Activated T-helper 1 cell treated with anti-CD3 and anti-CD28 coated beads, Interleukin-12 subunit alpha, Interleukin-12 subunit beta, Interleukin-2, Interleukin-4 antibody, amounts not matched to agents 30 ng/mL and 10 ng/mL and 1 ng/mL, durations not matched to agents 14 hours and 24 hours and 36 hours (primary cell): ENCODE measurements at regions of chr1 and their contacts with region 1.

Region 1: DNA sequence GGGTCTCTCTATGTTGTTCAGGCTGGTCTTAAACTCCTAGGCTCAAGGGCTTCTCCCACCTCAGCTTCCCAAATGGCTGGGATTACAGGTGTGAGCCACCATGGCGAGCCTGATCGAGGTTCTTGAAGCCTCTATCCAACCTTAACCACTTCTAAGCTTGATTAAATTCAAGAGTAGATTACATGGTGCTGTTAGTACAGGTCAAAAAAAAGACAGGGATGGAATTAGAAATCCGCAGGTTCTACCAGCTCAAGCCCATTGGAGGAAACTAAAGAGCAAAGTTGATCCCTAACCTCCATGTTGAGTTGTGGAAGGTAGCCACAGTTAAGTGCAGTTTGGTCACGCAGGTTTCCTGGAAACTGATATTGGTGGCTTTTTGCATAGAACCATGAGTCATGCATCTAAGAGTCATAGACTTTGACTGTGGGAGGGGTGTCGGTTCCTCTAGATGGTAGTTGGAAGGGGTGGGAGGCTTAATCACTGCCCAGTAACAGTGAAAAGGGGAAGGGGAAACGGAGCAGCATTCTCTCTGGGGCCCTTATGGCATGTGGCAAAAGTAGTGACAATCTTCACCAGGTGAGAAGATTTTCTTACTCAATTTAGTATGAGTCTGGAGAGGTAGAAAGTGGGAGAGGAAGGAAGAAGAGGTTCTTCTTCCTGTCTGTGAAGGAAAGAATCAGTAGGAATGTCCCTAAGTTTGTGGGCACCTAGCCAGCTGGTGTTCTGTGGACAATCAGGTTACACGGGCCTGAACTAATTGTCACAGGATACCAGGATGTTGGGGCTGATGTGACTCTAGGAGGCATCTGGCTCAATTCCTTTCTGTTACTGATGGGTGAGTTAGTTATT is 7.0 kb downstream of the CD53 start:
- DNase-seq: peak; percentile 74
- H3K4me3 Mint-ChIP-seq: peak overlapping the region; percentile 78
- H3K27ac Mint-ChIP-seq: peak overlapping the region; percentile 99
- H3K4me1 Mint-ChIP-seq: peaks cover 84% of the 10 kb centered on the region
- H3K27me3 Mint-ChIP-seq: no peaks in the 10 kb centered on the region

Region 2: GRCh38 chr1:110235834-110236682 is 643.9 kb before region 1 on chr1:
- intact Hi-C with region 1: loop called (anchors 1 kb)
- DNase-seq: no peak
- H3K4me3 Mint-ChIP-seq: no peak overlapping the region
- H3K27ac Mint-ChIP-seq: peak overlapping the region; percentile 80
- H3K4me1 Mint-ChIP-seq: peaks cover 51% of the 10 kb centered on the region
- H3K27me3 Mint-ChIP-seq: no peaks in the 10 kb centered on the region

Region 3: DNA sequence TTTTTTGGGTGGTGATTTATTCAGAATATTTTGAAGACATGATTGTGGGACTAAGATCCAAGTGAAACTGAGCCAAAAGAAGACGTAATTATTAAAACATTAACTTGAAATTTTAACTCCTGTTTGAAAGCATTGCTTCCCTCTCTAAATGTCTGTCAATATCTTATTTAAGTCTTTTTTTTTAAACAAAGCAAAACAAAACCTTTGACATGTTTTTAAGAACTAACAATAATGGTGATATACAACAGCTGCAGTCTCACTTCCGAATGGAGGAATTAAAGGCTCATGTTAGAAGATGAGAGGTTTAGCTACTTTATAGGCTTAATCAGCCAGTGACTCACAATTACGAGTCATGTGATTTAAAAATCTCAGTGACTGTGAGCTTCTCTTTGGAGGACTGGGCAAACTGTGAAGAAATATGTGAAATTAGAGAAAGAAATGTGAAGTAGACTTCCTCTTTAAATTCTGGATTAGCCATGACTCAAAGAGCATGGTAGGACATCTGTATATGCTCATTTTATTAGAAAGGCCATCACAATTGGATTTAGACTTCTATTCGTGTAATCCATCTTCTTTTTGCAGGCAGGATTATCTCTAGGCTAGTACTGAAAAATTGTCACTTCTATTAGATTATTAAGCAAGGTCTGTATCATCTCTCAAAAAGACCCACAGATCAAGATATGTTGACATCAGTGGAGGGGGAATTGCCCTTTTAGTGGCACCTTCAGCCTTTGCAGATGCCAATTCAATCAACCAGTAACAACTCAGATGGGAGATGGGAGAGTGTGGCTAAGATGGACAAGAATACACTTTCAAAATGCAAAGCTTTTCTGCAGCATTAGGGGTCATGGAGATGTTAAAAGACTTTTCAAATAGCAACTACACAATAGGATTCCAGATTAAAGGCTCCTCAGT is 233.9 kb before region 1 on chr1:
- intact Hi-C with region 1: loop called (anchors 1 kb)
- DNase-seq: no peak
- H3K4me3 Mint-ChIP-seq: peak overlapping the region; percentile 56
- H3K27ac Mint-ChIP-seq: peak overlapping the region; percentile 81
- H3K4me1 Mint-ChIP-seq: peaks cover 53% of the 10 kb centered on the region
- H3K27me3 Mint-ChIP-seq: no peaks in the 10 kb centered on the region

Region 4: DNA sequence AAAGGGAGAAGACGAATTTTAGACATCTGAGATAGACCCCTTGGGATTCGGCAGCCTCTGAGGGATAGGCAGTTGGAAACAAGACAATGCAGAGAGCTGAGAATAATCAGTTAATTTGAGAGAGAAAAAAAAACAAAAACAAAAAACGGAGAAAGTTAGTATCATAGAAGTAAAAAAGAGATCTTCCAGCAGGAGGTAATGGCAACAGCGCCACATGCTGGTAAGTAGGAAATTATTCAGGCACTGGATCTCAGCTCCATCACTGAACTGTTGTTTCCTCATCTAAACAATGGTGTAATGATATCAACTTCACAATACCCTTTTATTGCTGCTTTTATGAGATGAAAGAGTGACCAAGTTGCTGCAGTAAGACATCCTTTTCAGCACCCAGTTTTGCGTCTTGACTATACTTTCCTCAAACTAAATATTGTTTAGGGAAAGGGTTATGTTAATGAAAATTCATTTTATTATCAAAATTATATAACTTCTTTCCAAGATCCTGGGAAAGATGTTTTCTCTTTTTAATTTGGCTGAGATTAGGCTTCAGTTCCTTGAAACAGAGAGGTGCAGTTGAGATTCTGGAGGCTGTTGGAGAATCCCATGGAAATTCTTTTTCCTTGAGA is 113.8 kb before region 1 on chr1:
- intact Hi-C with region 1: no loop called
- DNase-seq: peak; percentile 34
- H3K4me3 Mint-ChIP-seq: no peak overlapping the region
- H3K27ac Mint-ChIP-seq: no peak overlapping the region
- H3K4me1 Mint-ChIP-seq: peaks cover 14% of the 10 kb centered on the region
- H3K27me3 Mint-ChIP-seq: peaks cover 17% of the 10 kb centered on the region

Region 5: GRCh38 chr1:110893908-110894490 is 14.0 kb after region 1 on chr1:
- intact Hi-C with region 1: loop called (anchors 1 kb)
- DNase-seq: no peak
- H3K4me3 Mint-ChIP-seq: no peak overlapping the region
- H3K27ac Mint-ChIP-seq: peak overlapping the region; percentile 78
- H3K4me1 Mint-ChIP-seq: peaks cover 94% of the 10 kb centered on the region
- H3K27me3 Mint-ChIP-seq: no peaks in the 10 kb centered on the region

Region 6: GRCh38 chr1:110904485-110904868 is 24.5 kb after region 1 on chr1:
- intact Hi-C with region 1: no loop called
- DNase-seq: no peak
- H3K4me3 Mint-ChIP-seq: no peak overlapping the region
- H3K27ac Mint-ChIP-seq: peak overlapping the region; percentile 3
- H3K4me1 Mint-ChIP-seq: peaks cover 2% of the 10 kb centered on the region
- H3K27me3 Mint-ChIP-seq: no peaks in the 10 kb centered on the region

Region 7: GRCh38 chr1:110921953-110922352 is 42.0 kb after region 1 on chr1:
- intact Hi-C with region 1: no loop called
- DNase-seq: no peak
- H3K4me3 Mint-ChIP-seq: no peak overlapping the region
- H3K27ac Mint-ChIP-seq: no peak overlapping the region
- H3K4me1 Mint-ChIP-seq: peaks cover 5% of the 10 kb centered on the region
- H3K27me3 Mint-ChIP-seq: peaks cover 7% of the 10 kb centered on the region

Region 8: DNA sequence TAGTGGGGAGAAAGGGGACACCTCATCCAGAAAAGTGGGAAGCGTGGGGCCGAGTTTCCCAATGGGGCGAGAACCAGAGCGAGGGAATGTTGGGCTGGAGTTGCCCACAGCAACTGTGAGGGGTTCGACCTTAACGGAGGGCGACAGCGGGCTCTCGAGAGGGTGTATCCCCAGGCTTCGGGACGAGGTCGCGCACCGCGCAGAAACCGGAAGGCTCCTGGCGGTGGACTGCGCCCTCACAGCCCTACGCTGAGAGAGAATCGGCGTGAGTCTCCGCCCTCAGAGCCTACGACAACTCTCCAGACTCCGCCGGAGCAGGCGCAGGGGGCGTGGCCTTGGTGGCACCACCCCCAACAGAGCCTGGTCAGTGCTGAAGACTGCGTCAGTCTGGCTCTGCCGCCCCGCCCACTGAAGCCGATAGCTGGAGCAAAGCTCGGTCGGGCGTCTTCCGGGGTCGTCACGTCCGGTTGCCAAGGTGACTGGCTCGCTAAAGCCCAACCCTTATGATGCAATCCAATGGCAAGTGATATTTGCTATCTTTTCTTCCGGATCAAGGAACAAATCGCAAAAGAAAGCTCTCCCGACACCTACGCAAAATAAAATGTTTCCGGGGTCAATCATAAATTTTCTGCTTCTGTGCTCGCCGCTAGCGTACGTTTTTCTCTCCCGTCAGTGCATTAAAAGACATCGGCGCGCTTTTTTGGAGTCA is 83.9 kb after region 1 on chr1 and contains the start of gene LRIF1:
- intact Hi-C with region 1: loop called (anchors 1 kb)
- DNase-seq: peak; percentile 100
- H3K4me3 Mint-ChIP-seq: peak within 1 kb of the TSS; percentile 90
- H3K27ac Mint-ChIP-seq: peak within 1 kb of the TSS; percentile 96
- H3K4me1 Mint-ChIP-seq: peaks cover 43% of the 10 kb centered on the region
- H3K27me3 Mint-ChIP-seq: peaks cover 2% of the 10 kb centered on the region
- total RNA-seq, gene LRIF1: 13.8 and 14.8 TPM in 2 replicates

Region 9: DNA sequence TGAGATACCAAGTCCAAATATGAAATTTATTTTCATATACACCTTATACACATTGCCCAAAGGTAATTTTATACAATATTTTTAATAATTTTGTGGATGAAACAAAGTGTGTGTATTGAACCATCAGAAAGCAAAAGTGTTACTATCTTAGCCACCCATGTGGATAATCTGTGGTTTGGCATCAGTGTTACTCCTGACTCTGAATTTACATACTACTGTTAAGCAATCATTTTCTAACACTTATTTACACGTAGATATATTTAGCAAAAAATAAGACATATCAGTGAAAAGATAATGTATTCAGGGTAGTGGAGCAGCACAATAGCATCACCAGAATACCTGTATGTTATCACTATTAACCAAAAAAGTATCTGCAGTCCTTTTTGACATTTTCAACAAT is 296.7 kb after region 1 on chr1:
- intact Hi-C with region 1: no loop called
- DNase-seq: no peak
- H3K4me3 Mint-ChIP-seq: no peak overlapping the region
- H3K27ac Mint-ChIP-seq: no peak overlapping the region
- H3K4me1 Mint-ChIP-seq: peaks cover 11% of the 10 kb centered on the region
- H3K27me3 Mint-ChIP-seq: no peaks in the 10 kb centered on the region

Region 10: GRCh38 chr1:111214074-111214801 is 334.3 kb after region 1 on chr1:
- intact Hi-C with region 1: loop called (anchors 1 kb)
- DNase-seq: no peak
- H3K4me3 Mint-ChIP-seq: peak overlapping the region; percentile 64
- H3K27ac Mint-ChIP-seq: peak overlapping the region; percentile 94
- H3K4me1 Mint-ChIP-seq: peaks cover 78% of the 10 kb centered on the region
- H3K27me3 Mint-ChIP-seq: no peaks in the 10 kb centered on the region

Region 11: GRCh38 chr1:111619635-111620440 is 739.9 kb after region 1 on chr1 and contains the start of gene RAP1A:
- intact Hi-C with region 1: loop called (anchors 5 kb)
- DNase-seq: peak; percentile 88
- H3K4me3 Mint-ChIP-seq: peak within 1 kb of the TSS; percentile 99
- H3K27ac Mint-ChIP-seq: peak within 1 kb of the TSS; percentile 93
- H3K4me1 Mint-ChIP-seq: peaks cover 76% of the 10 kb centered on the region
- H3K27me3 Mint-ChIP-seq: no peaks in the 10 kb centered on the region
- total RNA-seq, gene RAP1A: 326 and 348 TPM in 2 replicates